Dorsolateral prefrontal cortex (tissue), 120 donors: ENCODE measurements at regions of chr11 and their contacts with region 1.

Region 1: DNA sequence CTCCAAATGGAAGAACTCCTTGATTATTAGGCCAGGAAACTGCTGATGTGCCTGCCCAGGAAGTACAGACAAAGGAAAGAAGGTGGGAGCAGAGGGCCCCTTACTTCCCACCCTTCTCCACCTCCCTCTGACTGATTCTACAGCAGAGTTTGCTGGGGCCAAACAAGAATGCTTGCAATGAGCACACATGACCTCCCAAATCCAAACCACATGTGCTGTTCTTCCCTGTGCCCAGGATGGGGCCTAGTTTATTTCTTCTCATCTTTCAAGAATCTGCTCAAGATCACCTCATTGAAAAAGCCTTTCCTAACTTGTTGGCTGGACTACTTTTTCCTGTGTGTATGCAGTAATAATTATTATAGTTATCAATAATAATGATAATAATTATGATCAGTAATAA is 286.1 kb downstream of the RAB38 start:
- DNase-seq: no peak
- H3K4me3 ChIP-seq: no peak overlapping the region
- H3K27ac ChIP-seq: no peak overlapping the region
- H3K27me3 ChIP-seq: no peaks in the 10 kb centered on the region
- CTCF ChIP-seq: no peak

Region 2: DNA sequence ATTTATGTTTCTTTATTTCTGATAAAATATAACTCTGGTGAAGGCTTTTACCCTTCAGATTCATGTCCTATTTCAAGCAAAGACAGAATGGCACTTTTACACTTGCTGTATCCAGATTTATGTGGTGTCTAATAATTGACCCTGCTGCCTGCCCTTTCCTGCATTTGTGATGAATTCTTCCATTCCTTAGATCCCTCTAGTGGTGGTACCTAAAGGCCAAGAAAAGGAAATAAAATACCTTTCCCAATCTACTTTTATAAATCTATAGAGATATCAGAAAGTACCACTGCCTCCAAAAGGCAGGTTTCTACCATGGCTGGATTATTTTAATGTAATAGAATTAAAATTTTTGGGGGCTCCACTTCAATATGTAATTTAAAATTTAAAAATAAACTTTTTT is 1480.3 kb before region 1 on chr11:
- intact Hi-C with region 1: loop called in 1 of 2 experiments (anchors 5 kb)
- DNase-seq: no peak
- H3K4me3 ChIP-seq: no peak overlapping the region
- H3K27ac ChIP-seq: no peak overlapping the region
- H3K27me3 ChIP-seq: no peaks in the 10 kb centered on the region
- CTCF ChIP-seq: peak in 2 of 56 donors; percentile 11 to 16

Region 3: DNA sequence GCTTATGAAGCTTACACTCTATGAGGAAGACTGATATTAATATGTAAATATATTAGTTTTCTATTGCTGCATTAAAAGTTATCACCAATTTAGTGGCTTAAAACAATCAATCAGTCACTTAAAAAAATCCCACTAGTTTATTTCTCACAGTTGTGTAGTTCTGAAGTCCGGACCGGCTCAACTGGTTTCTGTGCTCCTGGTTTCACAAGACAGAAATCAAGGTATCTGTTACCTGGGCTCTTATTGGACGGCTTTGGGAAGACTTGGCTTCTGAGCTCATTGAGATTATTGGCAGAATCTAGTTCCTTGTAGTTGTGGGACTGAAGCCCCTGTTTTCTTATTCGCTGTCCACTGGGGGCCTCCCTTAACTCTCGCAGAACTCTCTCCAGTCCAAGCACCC is 56.9 kb before region 1 on chr11:
- intact Hi-C with region 1: no loop called
- DNase-seq: no peak
- H3K4me3 ChIP-seq: no peak overlapping the region
- H3K27ac ChIP-seq: no peak overlapping the region
- H3K27me3 ChIP-seq: no peaks in the 10 kb centered on the region
- CTCF ChIP-seq: no peak